ENCODE measurements at regions of chr12 and their contacts with region 1.

Region 1: GRCh38 chr12:12266873-12267741 is at the start of gene LRP6:
- DNase-seq: peak; percentile 83 to 92
- H3K4me3 ChIP-seq: peak within 1 kb of the TSS; percentile 64 to 87
- H3K27ac ChIP-seq: peak within 1 kb of the TSS; percentile 97 to 99
- H3K4me1 ChIP-seq: peaks cover 0 to 20% (median 8%) of the 10 kb centered on the region in 4 donors
- H3K27me3 ChIP-seq: no peaks in the 10 kb centered on the region
- CTCF ChIP-seq: no peak

Region 2: GRCh38 chr12:11171145-11171968 is 1095.8 kb before region 1 on chr12 and contains the start of gene SMIM10L1:
- intact Hi-C with region 1: loop called (anchors 5 kb)
- DNase-seq: peak; percentile 91 to 96
- H3K4me3 ChIP-seq: peak within 1 kb of the TSS; percentile 94 to 98
- H3K27ac ChIP-seq: peak within 1 kb of the TSS; percentile 97 to 99
- H3K4me1 ChIP-seq: peaks cover 0 to 40% (median 22%) of the 10 kb centered on the region in 4 donors
- H3K27me3 ChIP-seq: no peaks in the 10 kb centered on the region
- CTCF ChIP-seq: no peak

Region 3: DNA sequence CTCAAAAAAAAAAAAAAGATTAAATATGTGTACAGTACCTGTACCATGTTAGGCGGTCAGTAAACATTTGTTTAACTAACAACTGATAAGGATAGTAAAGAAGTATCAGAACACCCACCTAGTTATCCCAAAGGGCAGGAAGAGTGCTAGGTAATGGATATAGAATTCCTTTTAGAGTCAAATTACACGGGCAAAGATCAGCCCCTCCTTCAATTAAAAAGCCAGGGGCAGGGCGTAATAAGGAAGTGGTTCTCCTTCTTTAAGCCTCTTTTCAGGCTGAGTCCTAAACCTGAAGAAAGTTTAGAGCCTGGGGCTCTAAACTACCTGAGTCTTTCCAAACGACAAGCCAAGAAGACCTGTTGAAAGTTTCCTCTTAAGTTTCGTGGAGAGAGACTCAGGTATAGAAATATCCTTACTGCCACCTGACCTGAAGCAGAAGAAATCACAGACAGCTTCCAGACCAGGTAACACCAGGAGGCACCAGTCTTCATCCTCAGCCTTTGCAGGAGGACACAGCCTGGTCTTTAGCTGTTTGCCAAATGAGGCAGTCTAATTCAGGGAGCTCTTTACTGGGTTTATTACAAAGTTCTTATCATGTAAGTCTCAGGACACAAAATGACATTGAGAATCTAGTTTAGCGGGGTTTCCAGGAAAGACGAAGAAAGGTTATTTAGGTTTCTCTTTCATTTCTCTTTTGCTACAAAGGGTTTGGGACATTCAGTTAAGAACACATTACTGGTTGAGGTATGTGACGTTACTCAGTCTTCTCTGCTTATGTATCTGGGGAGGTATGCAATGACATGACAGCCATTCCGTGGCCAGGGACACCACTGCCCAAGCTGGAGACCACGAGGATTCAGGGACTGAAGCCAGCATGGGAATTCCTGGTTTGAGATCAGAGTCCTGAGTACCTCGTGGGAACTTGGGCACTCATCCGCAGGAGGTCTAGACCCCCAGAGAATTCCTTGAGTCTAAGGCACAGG is 196.1 kb before region 1 on chr12 and contains the start of gene BCL2L14:
- intact Hi-C with region 1: no loop called
- DNase-seq: no peak
- H3K4me3 ChIP-seq: no peak within 1 kb of the TSS
- H3K27ac ChIP-seq: no peak within 1 kb of the TSS
- H3K4me1 ChIP-seq: peaks cover 0 to 6% (median 0%) of the 10 kb centered on the region in 4 donors
- H3K27me3 ChIP-seq: peaks cover 0 to 3% of the 10 kb centered on the region in 2 donors
- CTCF ChIP-seq: no peak